PC-3 (cell line): ENCODE measurements at regions of chr15 and their contacts with region 1.

Region 1: GRCh38 chr15:52728899-52729298 is 49.7 kb upstream of the ATOSA start:
- DNase-seq: peak; percentile 67
- ATAC-seq: peak; percentile 71
- H3K4me3 ChIP-seq: no peak overlapping the region
- H3K27ac ChIP-seq: peak overlapping the region; percentile 12; the same call in 1 of the 2 replicates
- H3K4me1 ChIP-seq: peaks cover 21% of the 10 kb centered on the region
- H3K27me3 ChIP-seq: no peaks in the 10 kb centered on the region
- CTCF ChIP-seq: no peak

Region 2: DNA sequence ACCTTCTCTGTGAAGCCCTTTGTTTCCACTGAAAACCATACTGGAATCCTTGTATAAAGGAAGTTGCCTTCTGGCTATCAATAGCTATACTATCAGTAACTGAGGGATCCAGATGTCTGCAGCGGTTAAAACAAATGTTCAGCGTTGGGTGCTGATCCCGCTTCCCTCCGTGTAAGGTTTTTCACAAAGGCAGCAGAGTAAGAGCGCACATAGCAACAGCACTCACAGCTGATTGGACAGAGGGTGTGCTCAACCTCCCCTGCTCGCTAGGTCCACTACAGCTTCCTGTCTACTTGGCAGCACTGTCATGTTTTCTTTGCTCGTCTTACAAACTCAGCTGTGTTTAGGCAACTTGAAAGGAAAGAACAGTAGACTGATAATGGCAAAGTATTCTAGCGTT is 77.0 kb before region 1 on chr15:
- CTCF ChIA-PET with region 1: no interaction called
- POLR2A ChIA-PET with region 1: no interaction called
- intact Hi-C with region 1: loop called (anchors 1 kb)
- DNase-seq: peak; percentile 71
- ATAC-seq: peak; percentile 84
- H3K4me3 ChIP-seq: peak overlapping the region; percentile 62
- H3K27ac ChIP-seq: peak overlapping the region; percentile 95
- H3K4me1 ChIP-seq: peaks cover 54% of the 10 kb centered on the region
- H3K27me3 ChIP-seq: no peaks in the 10 kb centered on the region
- CTCF ChIP-seq: no peak

Region 3: GRCh38 chr15:52658955-52659354 is 69.9 kb before region 1 on chr15:
- CTCF ChIA-PET with region 1: no interaction called
- POLR2A ChIA-PET with region 1: no interaction called
- intact Hi-C with region 1: loop called (anchors 1 kb)
- DNase-seq: peak; percentile 66
- ATAC-seq: peak; percentile 16
- H3K4me3 ChIP-seq: no peak overlapping the region
- H3K27ac ChIP-seq: peak overlapping the region; percentile 23
- H3K4me1 ChIP-seq: peaks cover 53% of the 10 kb centered on the region
- H3K27me3 ChIP-seq: no peaks in the 10 kb centered on the region
- CTCF ChIP-seq: no peak

Region 4: GRCh38 chr15:52778457-52778856 is 49.6 kb after region 1 on chr15:
- CTCF ChIA-PET with region 1: no interaction called
- POLR2A ChIA-PET with region 1: no interaction called
- intact Hi-C with region 1: no loop called
- DNase-seq: no peak
- ATAC-seq: no peak
- H3K4me3 ChIP-seq: no peak overlapping the region
- H3K27ac ChIP-seq: no peak overlapping the region
- H3K4me1 ChIP-seq: no peaks in the 10 kb centered on the region
- H3K27me3 ChIP-seq: peaks cover 75% of the 10 kb centered on the region
- CTCF ChIP-seq: no peak